ENCODE measurements at regions of chr20 and their contacts with region 1.

Region 1: GRCh38 chr20:63520504-63520933 is at the start of gene PPDPF:
- DNase-seq: peak; percentile 79 to 89 (median 84)
- H3K4me3 ChIP-seq: peak within 1 kb of the TSS; percentile 70
- H3K4me3 Mint-ChIP-seq: peak within 1 kb of the TSS; percentile 76 to 91 (median 81)
- H3K27ac ChIP-seq: peak within 1 kb of the TSS; percentile 79
- H3K27ac Mint-ChIP-seq: peak within 1 kb of the TSS; percentile 35 to 91 (median 76)
- H3K4me1 ChIP-seq: peaks cover 20% of the 10 kb centered on the region
- H3K4me1 Mint-ChIP-seq: peaks cover 8 to 34% (median 10%) of the 10 kb centered on the region in 3 donors
- H3K27me3 ChIP-seq: no peaks in the 10 kb centered on the region
- H3K27me3 Mint-ChIP-seq: no peaks in the 10 kb centered on the region
- total RNA-seq, gene PPDPF: 207 to 218 TPM

Region 2: GRCh38 chr20:63427724-63428330 is 92.7 kb before region 1 on chr20:
- CTCF ChIA-PET with region 1: no interaction called
- POLR2A ChIA-PET with region 1: no interaction called
- DNase-seq: no peak
- H3K4me3 ChIP-seq: no peak overlapping the region
- H3K4me3 Mint-ChIP-seq: peak overlapping the region in 1 of 7 donors; percentile 32
- H3K27ac ChIP-seq: no peak overlapping the region
- H3K27ac Mint-ChIP-seq: no peak overlapping the region
- H3K4me1 ChIP-seq: no peaks in the 10 kb centered on the region
- H3K4me1 Mint-ChIP-seq: peaks cover 0 to 1% (median 0%) of the 10 kb centered on the region in 3 donors
- H3K27me3 ChIP-seq: no peaks in the 10 kb centered on the region
- H3K27me3 Mint-ChIP-seq: no peaks in the 10 kb centered on the region

Region 3: GRCh38 chr20:63495741-63496595 is 24.6 kb before region 1 on chr20:
- CTCF ChIA-PET with region 1: interaction called, 20 read pairs
- POLR2A ChIA-PET with region 1: interaction called, 8 read pairs
- DNase-seq: peak; percentile 64 to 81 (median 75)
- H3K4me3 ChIP-seq: peak overlapping the region; percentile 43
- H3K4me3 Mint-ChIP-seq: peak overlapping the region in 6 of 7 donors; percentile 45 to 83 (median 66)
- H3K27ac ChIP-seq: no peak overlapping the region
- H3K27ac Mint-ChIP-seq: no peak overlapping the region
- H3K4me1 ChIP-seq: peaks cover 8% of the 10 kb centered on the region
- H3K4me1 Mint-ChIP-seq: peaks cover 0 to 14% (median 2%) of the 10 kb centered on the region in 3 donors
- H3K27me3 ChIP-seq: peaks cover 18% of the 10 kb centered on the region
- H3K27me3 Mint-ChIP-seq: peaks cover 5 to 13% of the 10 kb centered on the region in 2 donors

Region 4: DNA sequence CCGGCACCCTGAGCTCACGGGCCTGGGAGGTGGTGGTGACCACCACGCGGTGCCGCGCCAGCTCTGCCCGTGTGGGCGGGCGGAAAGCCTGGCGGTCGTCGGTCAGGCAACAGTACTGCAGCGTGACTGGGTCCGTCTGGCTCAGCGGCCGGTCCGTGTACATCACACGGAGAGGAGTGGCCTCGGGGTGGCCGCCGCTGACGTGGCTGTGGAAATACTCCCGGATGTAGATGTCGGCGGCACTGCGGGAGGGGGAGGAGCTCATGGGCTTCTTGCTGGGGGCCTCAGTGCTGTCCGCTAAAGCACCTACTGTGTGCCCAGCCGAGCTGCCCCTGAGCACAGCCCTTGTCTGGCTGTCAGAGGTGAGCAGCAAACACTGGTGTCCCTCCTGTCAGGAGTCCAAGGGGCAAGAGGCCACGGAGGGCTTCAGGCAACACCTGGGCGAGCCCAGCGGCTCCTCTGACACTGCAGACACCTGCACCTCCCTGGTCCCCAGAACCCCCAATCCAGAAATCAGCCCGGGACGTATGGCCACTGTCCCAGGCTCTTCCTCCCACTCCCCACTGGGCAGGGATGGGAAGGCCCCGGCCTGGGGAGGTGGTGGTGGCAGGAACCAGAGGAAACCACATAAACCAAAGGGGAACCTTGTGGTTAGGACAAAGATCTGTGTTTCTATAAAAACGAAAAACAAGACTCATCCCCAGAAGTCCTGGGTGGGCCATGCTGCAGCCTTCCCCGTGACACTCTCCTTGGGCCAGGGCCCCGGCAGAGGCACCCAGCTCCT is 47.1 kb after region 1 on chr20:
- CTCF ChIA-PET with region 1: no interaction called
- POLR2A ChIA-PET with region 1: interaction called, 11 read pairs
- DNase-seq: peak; percentile 43 to 73 (median 46)
- H3K4me3 ChIP-seq: peak overlapping the region; percentile 59
- H3K4me3 Mint-ChIP-seq: peak overlapping the region; percentile 51 to 93 (median 77)
- H3K27ac ChIP-seq: no peak overlapping the region
- H3K27ac Mint-ChIP-seq: peak overlapping the region in 7 of 8 donors; percentile 29 to 89 (median 80)
- H3K4me1 ChIP-seq: peaks cover 28% of the 10 kb centered on the region
- H3K4me1 Mint-ChIP-seq: peaks cover 14 to 32% (median 17%) of the 10 kb centered on the region in 3 donors
- H3K27me3 ChIP-seq: no peaks in the 10 kb centered on the region
- H3K27me3 Mint-ChIP-seq: no peaks in the 10 kb centered on the region

Measured in CD8-positive, alpha-beta memory T cell (primary cell).